CD4-positive, alpha-beta memory T cell (primary cell): ENCODE measurements at regions of chr17 and their contacts with region 1.

Region 1: DNA sequence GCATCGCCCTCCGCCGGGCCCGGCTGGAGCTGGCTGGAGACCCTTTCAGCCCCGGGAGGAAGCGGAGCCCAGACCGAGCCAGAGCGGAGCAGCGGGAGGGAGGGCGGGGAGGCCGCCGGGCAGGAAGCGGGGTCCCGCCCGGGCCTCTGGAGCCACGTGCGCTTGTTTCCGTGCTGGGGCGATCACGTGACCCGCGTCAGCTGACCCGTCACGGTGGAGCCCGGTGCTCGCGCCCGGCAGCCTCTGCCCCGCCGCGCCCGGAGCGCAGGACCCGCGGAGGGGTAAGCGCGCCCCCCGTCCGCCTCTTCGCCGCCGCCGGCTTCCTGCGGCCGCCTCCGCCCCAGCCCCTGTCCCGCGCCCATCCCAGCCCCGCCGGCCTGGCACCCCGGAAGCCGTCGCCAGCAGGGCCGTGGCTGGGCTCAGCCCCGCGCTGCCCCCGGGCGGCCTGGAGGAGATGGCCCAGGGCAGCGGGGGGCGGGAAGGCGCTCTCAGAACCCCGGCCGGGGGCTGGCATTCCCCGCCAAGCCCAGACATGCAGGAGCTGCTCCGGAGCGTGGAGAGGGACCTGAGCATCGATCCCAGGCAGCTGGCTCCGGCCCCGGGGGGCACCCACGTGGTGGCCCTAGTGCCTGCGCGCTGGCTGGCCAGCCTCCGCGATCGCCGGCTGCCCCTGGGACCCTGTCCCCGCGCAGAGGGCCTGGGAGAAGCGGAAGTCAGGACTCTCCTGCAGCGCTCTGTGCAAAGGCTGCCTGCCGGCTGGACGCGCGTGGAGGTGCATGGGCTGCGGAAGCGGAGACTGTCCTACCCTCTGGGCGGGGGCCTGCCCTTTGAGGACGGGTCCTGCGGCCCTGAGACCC is at the start of gene WDR81:
- DNase-seq: peak; percentile 81 to 87 (median 84)
- H3K4me3 ChIP-seq: peak within 1 kb of the TSS; percentile 11 to 72
- H3K4me3 Mint-ChIP-seq: peak within 1 kb of the TSS; percentile 70 to 85 (median 82)
- H3K27ac ChIP-seq: peak within 1 kb of the TSS; percentile 64
- H3K27ac Mint-ChIP-seq: peak within 1 kb of the TSS; percentile 81 to 96 (median 89)
- H3K4me1 ChIP-seq: peaks cover 64% of the 10 kb centered on the region
- H3K4me1 Mint-ChIP-seq: peaks cover 16 to 69% (median 34%) of the 10 kb centered on the region in 4 donors
- H3K27me3 ChIP-seq: no peaks in the 10 kb centered on the region
- H3K27me3 Mint-ChIP-seq: no peaks in the 10 kb centered on the region
- total RNA-seq, gene WDR81: 36.3 to 40.3 TPM

Region 2: GRCh38 chr17:1511290-1511689 is 213.4 kb before region 1 on chr17:
- CTCF ChIA-PET with region 1: no interaction called
- POLR2A ChIA-PET with region 1: no interaction called
- intact Hi-C with region 1: no loop called
- DNase-seq: no peak
- H3K4me3 ChIP-seq: no peak overlapping the region
- H3K4me3 Mint-ChIP-seq: no peak overlapping the region
- H3K27ac ChIP-seq: no peak overlapping the region
- H3K27ac Mint-ChIP-seq: no peak overlapping the region
- H3K4me1 ChIP-seq: peaks cover 18% of the 10 kb centered on the region
- H3K4me1 Mint-ChIP-seq: peaks cover 17 to 41% (median 32%) of the 10 kb centered on the region in 4 donors
- H3K27me3 ChIP-seq: no peaks in the 10 kb centered on the region
- H3K27me3 Mint-ChIP-seq: no peaks in the 10 kb centered on the region

Region 3: DNA sequence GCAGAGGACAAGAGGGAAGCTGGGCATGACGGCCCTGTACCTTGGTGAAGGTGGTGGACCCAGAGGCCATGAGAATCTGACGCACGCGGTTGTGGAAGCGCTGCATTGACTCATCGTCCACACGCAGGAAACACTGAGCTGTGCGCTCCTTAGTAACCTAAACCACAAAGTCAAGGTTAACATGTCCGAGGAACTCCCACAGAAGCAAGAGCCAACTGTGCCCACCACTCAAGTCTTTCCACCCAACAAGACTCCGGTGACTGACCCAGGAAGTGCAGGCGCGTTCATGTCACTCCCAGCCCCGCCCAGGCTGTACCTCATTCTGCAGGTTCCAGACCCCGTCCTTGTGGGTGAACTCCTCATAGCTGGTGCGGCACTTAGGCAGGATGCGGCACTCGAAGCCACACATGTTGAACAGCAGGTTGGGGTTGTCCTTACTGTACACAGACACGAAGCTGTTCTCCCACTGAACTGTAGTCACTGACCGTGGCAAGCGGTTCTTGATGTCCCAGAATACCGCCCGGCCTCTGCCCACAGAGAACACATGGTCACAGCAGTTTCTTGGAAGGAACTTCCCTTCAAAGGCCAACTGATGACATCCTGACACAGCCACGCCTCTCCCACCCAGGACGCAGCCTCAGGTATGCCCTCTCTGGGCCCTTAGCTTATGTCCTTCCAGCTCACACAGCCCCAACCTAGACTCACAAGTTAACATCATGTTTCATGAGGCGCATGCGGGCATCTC is 51.5 kb before region 1 on chr17:
- CTCF ChIA-PET with region 1: interaction called, 18 read pairs
- POLR2A ChIA-PET with region 1: interaction called, 4 read pairs
- intact Hi-C with region 1: no loop called
- DNase-seq: peak; percentile 21 to 71 (median 42)
- H3K4me3 ChIP-seq: no peak overlapping the region
- H3K4me3 Mint-ChIP-seq: peak overlapping the region in 2 of 8 donors; percentile 13 to 21
- H3K27ac ChIP-seq: peak overlapping the region; percentile 4
- H3K27ac Mint-ChIP-seq: peak overlapping the region in 6 of 7 donors; percentile 37 to 74 (median 62)
- H3K4me1 ChIP-seq: no peaks in the 10 kb centered on the region
- H3K4me1 Mint-ChIP-seq: peaks cover 18 to 37% (median 29%) of the 10 kb centered on the region in 4 donors
- H3K27me3 ChIP-seq: no peaks in the 10 kb centered on the region
- H3K27me3 Mint-ChIP-seq: no peaks in the 10 kb centered on the region

Region 4: DNA sequence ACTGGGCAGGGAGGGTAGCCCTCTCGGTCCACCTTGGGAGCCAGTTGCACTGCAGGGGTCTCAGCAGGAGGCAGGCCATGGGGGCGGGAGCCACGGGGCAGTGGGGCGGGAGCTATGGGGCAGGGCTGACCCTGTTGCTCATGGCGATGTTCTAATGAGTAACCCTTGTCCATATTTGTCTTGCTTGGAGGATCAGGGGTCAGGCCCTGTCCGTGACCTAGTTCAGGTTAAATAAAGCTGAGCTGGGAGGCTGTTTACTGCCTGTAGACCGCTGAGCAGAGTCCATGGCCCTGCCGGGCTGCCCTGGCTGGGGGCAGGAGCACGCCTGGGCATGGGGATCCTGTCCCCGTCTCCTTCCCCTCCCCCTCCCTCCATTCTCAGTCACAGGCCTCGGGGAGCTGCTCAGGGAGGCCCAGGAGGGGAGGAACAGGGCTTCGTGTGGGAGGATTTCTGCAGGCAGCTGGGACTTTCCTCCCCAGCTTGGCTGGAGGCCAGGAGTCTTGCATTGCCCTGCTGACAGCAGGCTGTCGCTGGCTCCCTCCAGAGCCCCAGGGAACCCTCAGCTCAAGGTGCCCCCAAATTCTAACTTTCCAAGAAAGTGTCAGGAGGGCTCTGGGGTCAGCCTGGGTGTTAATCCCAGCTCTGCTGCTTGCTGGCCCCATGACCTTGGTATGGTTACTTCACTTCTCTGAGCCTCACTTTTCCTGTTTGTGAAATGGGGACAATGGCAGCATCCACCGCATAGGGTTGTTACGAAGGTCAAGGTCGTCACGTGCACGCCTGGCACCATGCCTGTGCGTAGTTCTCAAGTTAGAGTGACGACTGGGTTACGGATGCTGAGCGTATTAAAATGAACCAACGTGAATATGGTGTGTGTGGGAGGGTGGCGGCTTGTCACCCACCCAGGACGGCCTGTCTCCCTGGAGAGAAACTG is 11.9 kb after region 1 on chr17:
- CTCF ChIA-PET with region 1: interaction called, 6 read pairs
- POLR2A ChIA-PET with region 1: interaction called, 12 read pairs
- intact Hi-C with region 1: no loop called
- DNase-seq: peak in 4 of 5 donors; percentile 32 to 51 (median 44)
- H3K4me3 ChIP-seq: no peak overlapping the region
- H3K4me3 Mint-ChIP-seq: peak overlapping the region in 1 of 8 donors; percentile 45
- H3K27ac ChIP-seq: peak overlapping the region; percentile 32
- H3K27ac Mint-ChIP-seq: peak overlapping the region in 6 of 7 donors; percentile 36 to 92 (median 78)
- H3K4me1 ChIP-seq: peaks cover 15% of the 10 kb centered on the region
- H3K4me1 Mint-ChIP-seq: peaks cover 2 to 29% (median 5%) of the 10 kb centered on the region in 4 donors
- H3K27me3 ChIP-seq: no peaks in the 10 kb centered on the region
- H3K27me3 Mint-ChIP-seq: no peaks in the 10 kb centered on the region

Region 5: GRCh38 chr17:1773696-1774181 is 49.0 kb after region 1 on chr17:
- CTCF ChIA-PET with region 1: interaction called, 10 read pairs
- POLR2A ChIA-PET with region 1: interaction called, 5 read pairs
- intact Hi-C with region 1: no loop called
- DNase-seq: no peak
- H3K4me3 ChIP-seq: no peak overlapping the region
- H3K4me3 Mint-ChIP-seq: no peak overlapping the region
- H3K27ac ChIP-seq: no peak overlapping the region
- H3K27ac Mint-ChIP-seq: peak overlapping the region in 5 of 7 donors; percentile 27 to 72 (median 47)
- H3K4me1 ChIP-seq: peaks cover 8% of the 10 kb centered on the region
- H3K4me1 Mint-ChIP-seq: peaks cover 7 to 19% (median 8%) of the 10 kb centered on the region in 4 donors
- H3K27me3 ChIP-seq: no peaks in the 10 kb centered on the region
- H3K27me3 Mint-ChIP-seq: no peaks in the 10 kb centered on the region

Region 6: GRCh38 chr17:1829592-1830257 is 105.0 kb after region 1 on chr17 and contains the starts of genes RPA1 and SMYD4:
- CTCF ChIA-PET with region 1: interaction called, 6 read pairs
- POLR2A ChIA-PET with region 1: interaction called, 10 read pairs
- intact Hi-C with region 1: no loop called
- DNase-seq: peak; percentile 87 to 91 (median 88)
- H3K4me3 ChIP-seq: peak within 1 kb of the TSS; percentile 58 to 73
- H3K4me3 Mint-ChIP-seq: peak within 1 kb of the TSS; percentile 92 to 99 (median 97)
- H3K27ac ChIP-seq: peak within 1 kb of the TSS; percentile 67
- H3K27ac Mint-ChIP-seq: peak within 1 kb of the TSS; percentile 89 to 99 (median 97)
- H3K4me1 ChIP-seq: peaks cover 59% of the 10 kb centered on the region
- H3K4me1 Mint-ChIP-seq: peaks cover 33 to 70% (median 52%) of the 10 kb centered on the region in 4 donors
- H3K27me3 ChIP-seq: no peaks in the 10 kb centered on the region
- H3K27me3 Mint-ChIP-seq: no peaks in the 10 kb centered on the region
- total RNA-seq, gene RPA1: 103 to 119 TPM
- total RNA-seq, gene SMYD4: 31.2 to 31.5 TPM

Region 7: GRCh38 chr17:2029911-2030778 is 305.4 kb after region 1 on chr17 and contains the start of gene DPH1:
- CTCF ChIA-PET with region 1: no interaction called
- POLR2A ChIA-PET with region 1: no interaction called
- intact Hi-C with region 1: loop called (anchors 5 kb)
- DNase-seq: peak; percentile 83 to 88 (median 83)
- H3K4me3 ChIP-seq: peak within 1 kb of the TSS; percentile 91 to 98
- H3K4me3 Mint-ChIP-seq: peak within 1 kb of the TSS; percentile 91 to 96 (median 94)
- H3K27ac ChIP-seq: peak within 1 kb of the TSS; percentile 81
- H3K27ac Mint-ChIP-seq: peak within 1 kb of the TSS; percentile 76 to 97 (median 94)
- H3K4me1 ChIP-seq: peaks cover 36% of the 10 kb centered on the region
- H3K4me1 Mint-ChIP-seq: peaks cover 14 to 44% (median 30%) of the 10 kb centered on the region in 4 donors
- H3K27me3 ChIP-seq: no peaks in the 10 kb centered on the region
- H3K27me3 Mint-ChIP-seq: peaks cover 5 to 12% of the 10 kb centered on the region in 2 donors
- total RNA-seq, gene DPH1: 76.6 to 95.8 TPM